Naive thymus-derived CD4-positive, alpha-beta T cell (primary cell): ENCODE measurements at regions of chr19 and their contacts with region 1.

Region 1: DNA sequence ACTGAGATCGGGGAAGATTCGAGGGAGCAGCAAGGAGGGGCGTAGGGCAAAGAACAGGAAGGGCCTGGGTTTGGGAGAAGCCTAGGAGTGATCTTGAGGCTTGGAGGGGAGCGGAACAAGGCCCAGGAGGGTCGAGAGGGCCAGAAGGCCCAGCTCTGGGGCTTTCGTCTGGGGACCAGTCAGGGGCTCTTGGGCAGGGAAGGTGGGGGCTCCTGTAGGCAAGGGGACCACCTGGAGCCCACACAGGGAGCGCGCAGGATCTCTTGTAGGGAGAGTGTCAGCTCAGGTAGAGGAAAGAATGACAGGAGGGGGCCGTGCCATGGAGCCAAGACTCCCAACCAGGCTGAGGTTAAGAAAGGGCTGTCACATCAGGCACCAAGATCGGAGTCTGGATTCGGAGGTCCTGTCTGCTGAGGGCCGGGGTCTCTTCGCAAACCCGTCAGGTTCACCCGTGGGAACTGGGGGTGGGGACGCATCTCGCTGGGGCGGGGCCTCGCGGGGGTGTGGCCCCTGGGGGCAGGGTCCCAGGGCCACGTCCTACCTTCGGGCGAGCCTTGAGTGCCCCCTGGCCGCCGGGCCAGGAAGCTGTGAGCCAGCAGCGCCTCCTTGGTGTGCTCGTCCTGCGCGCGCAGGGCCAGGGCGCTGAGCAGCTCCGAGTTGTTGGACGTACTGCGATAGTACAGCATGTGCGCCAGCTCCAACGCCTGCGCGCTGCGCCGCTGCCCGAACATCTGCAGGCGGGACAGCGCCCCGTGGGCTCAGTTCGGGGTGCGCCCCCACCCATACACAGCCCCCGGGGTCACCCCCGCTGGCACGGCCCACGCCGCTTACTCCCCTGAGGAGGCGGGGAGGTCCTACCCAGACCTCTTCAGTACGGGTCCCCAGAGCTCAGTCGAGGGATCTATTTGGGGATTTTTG is 8.4 kb downstream of the EMP3 start:
- DNase-seq: peak; percentile 90 to 96 (median 93)
- ATAC-seq: peak; percentile 77
- H3K4me3 ChIP-seq: peak overlapping the region; percentile 77
- H3K4me3 Mint-ChIP-seq: peak overlapping the region; percentile 83 to 100 (median 97)
- H3K27ac ChIP-seq: peak overlapping the region; percentile 95
- H3K27ac Mint-ChIP-seq: peak overlapping the region; percentile 93 to 100 (median 97)
- H3K4me1 ChIP-seq: peaks cover 32 to 43% of the 10 kb centered on the region in 2 donors
- H3K4me1 Mint-ChIP-seq: peaks cover 25 to 61% (median 47%) of the 10 kb centered on the region in 7 donors
- H3K27me3 ChIP-seq: no peaks in the 10 kb centered on the region
- H3K27me3 Mint-ChIP-seq: no peaks in the 10 kb centered on the region

Region 2: GRCh38 chr19:48170038-48170812 is 163.5 kb before region 1 on chr19 and contains the starts of genes LIG1 and ZSWIM9:
- CTCF ChIA-PET with region 1: no interaction called
- POLR2A ChIA-PET with region 1: interaction called, 7 read pairs
- intact Hi-C with region 1: loop called in 1 of 2 experiments (anchors 5 kb)
- DNase-seq: peak; percentile 87 to 96 (median 94)
- ATAC-seq: peak; percentile 89
- H3K4me3 ChIP-seq: peak within 1 kb of the TSS; percentile 98
- H3K4me3 Mint-ChIP-seq: peak within 1 kb of the TSS; percentile 90 to 100 (median 97)
- H3K27ac ChIP-seq: peak within 1 kb of the TSS; percentile 94
- H3K27ac Mint-ChIP-seq: peak within 1 kb of the TSS; percentile 92 to 100 (median 97)
- H3K4me1 ChIP-seq: peaks cover 14 to 16% of the 10 kb centered on the region in 2 donors
- H3K4me1 Mint-ChIP-seq: peaks cover 20 to 44% (median 32%) of the 10 kb centered on the region in 7 donors
- H3K27me3 ChIP-seq: no peaks in the 10 kb centered on the region
- H3K27me3 Mint-ChIP-seq: no peaks in the 10 kb centered on the region
- total RNA-seq, gene LIG1: 61.0 to 134 (median 122) TPM
- total RNA-seq, gene ZSWIM9: 5.0 to 11.6 (median 7.4) TPM

Region 3: GRCh38 chr19:48271531-48272151 is 62.1 kb before region 1 on chr19:
- CTCF ChIA-PET with region 1: interaction called, 7 read pairs
- POLR2A ChIA-PET with region 1: interaction called, 5 read pairs
- intact Hi-C with region 1: loop called in 1 of 2 experiments (anchors 1 kb)
- DNase-seq: peak in 4 of 9 donors; percentile 5 to 32 (median 9)
- ATAC-seq: peak; percentile 40
- H3K4me3 ChIP-seq: peak overlapping the region; percentile 55
- H3K4me3 Mint-ChIP-seq: peak overlapping the region; percentile 76 to 95 (median 88)
- H3K27ac ChIP-seq: no peak overlapping the region
- H3K27ac Mint-ChIP-seq: peak overlapping the region in 1 of 9 donors; percentile 33
- H3K4me1 ChIP-seq: peaks cover 0 to 5% of the 10 kb centered on the region in 2 donors
- H3K4me1 Mint-ChIP-seq: peaks cover 13 to 30% (median 20%) of the 10 kb centered on the region in 7 donors
- H3K27me3 ChIP-seq: no peaks in the 10 kb centered on the region
- H3K27me3 Mint-ChIP-seq: peaks cover 0 to 23% (median 11%) of the 10 kb centered on the region in 5 donors

Region 4: GRCh38 chr19:48351341-48351752 is 17.6 kb after region 1 on chr19:
- CTCF ChIA-PET with region 1: no interaction called
- POLR2A ChIA-PET with region 1: no interaction called
- intact Hi-C with region 1: loop called in 1 of 2 experiments (anchors 2 kb)
- DNase-seq: peak; percentile 49 to 81 (median 64)
- ATAC-seq: peak; percentile 82
- H3K4me3 ChIP-seq: no peak overlapping the region
- H3K4me3 Mint-ChIP-seq: peak overlapping the region in 1 of 10 donors; percentile 45
- H3K27ac ChIP-seq: no peak overlapping the region
- H3K27ac Mint-ChIP-seq: peak overlapping the region in 1 of 9 donors; percentile 5
- H3K4me1 ChIP-seq: no peaks in the 10 kb centered on the region
- H3K4me1 Mint-ChIP-seq: peaks cover 0 to 10% (median 3%) of the 10 kb centered on the region in 7 donors
- H3K27me3 ChIP-seq: no peaks in the 10 kb centered on the region
- H3K27me3 Mint-ChIP-seq: no peaks in the 10 kb centered on the region

Region 5: GRCh38 chr19:48468775-48469288 is 135.1 kb after region 1 on chr19:
- CTCF ChIA-PET with region 1: no interaction called
- POLR2A ChIA-PET with region 1: no interaction called
- intact Hi-C with region 1: loop called in 1 of 2 experiments (anchors 1 kb)
- DNase-seq: peak; percentile 93 to 100 (median 100)
- ATAC-seq: peak; percentile 93
- H3K4me3 ChIP-seq: peak overlapping the region; percentile 93
- H3K4me3 Mint-ChIP-seq: peak overlapping the region; percentile 81 to 96 (median 92)
- H3K27ac ChIP-seq: peak overlapping the region; percentile 86
- H3K27ac Mint-ChIP-seq: peak overlapping the region; percentile 85 to 96 (median 90)
- H3K4me1 ChIP-seq: peaks cover 7 to 15% of the 10 kb centered on the region in 2 donors
- H3K4me1 Mint-ChIP-seq: peaks cover 0 to 30% (median 18%) of the 10 kb centered on the region in 7 donors
- H3K27me3 ChIP-seq: no peaks in the 10 kb centered on the region
- H3K27me3 Mint-ChIP-seq: no peaks in the 10 kb centered on the region

Region 6: DNA sequence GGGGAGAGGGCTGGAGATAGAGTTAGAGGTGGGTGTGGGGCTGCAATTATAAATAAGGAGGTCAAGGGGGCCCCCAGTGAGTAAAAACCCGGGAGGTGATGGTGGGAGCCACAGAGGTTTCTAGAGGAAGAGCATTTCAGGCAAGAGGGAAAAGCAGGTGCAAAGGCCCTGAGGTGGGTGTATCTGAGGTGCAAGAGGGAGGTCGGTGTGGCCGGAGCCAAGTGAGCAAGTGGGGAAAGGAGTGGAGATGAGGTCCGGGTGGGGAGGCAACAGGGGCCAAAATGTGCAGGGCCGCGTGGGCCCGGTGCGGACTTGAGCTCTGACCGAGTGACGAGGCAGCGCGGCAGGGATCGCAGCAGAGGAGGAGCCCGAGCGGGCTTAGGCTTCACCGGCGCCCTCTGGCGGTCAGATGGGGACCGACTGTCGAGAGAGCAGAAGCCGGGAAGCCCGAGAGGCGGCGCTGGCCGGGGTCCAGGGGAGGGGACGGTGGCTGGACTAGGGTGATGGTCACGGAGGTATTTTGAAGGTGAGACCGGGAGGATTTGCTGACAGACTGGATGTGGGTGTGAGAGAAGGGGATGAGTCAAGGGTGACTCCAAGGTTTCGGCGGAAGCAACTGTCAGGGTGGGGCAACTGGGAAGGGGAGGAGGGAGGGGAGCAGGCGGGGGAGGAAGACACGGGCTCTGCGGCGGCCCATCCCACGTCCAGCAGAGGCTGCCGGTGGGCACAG is 255.1 kb after region 1 on chr19:
- CTCF ChIA-PET with region 1: interaction called, 3 read pairs
- POLR2A ChIA-PET with region 1: interaction called, 3 read pairs
- intact Hi-C with region 1: loop called in 1 of 2 experiments (anchors 10 kb)
- DNase-seq: peak; percentile 65 to 92 (median 81)
- ATAC-seq: peak; percentile 92
- H3K4me3 ChIP-seq: no peak overlapping the region
- H3K4me3 Mint-ChIP-seq: peak overlapping the region; percentile 51 to 93 (median 78)
- H3K27ac ChIP-seq: no peak overlapping the region
- H3K27ac Mint-ChIP-seq: peak overlapping the region in 6 of 9 donors; percentile 37 to 86 (median 78)
- H3K4me1 ChIP-seq: peaks cover 0 to 3% of the 10 kb centered on the region in 2 donors
- H3K4me1 Mint-ChIP-seq: peaks cover 11 to 27% (median 15%) of the 10 kb centered on the region in 7 donors
- H3K27me3 ChIP-seq: no peaks in the 10 kb centered on the region
- H3K27me3 Mint-ChIP-seq: peaks cover 0 to 5% (median 0%) of the 10 kb centered on the region in 5 donors

Region 7: GRCh38 chr19:48872182-48872883 is 538.6 kb after region 1 on chr19 and contains the start of gene PPP1R15A:
- CTCF ChIA-PET with region 1: no interaction called
- POLR2A ChIA-PET with region 1: no interaction called
- intact Hi-C with region 1: loop called in 1 of 2 experiments (anchors 2 kb)
- DNase-seq: peak; percentile 96 to 99 (median 98)
- ATAC-seq: peak; percentile 58
- H3K4me3 ChIP-seq: peak within 1 kb of the TSS; percentile 86
- H3K4me3 Mint-ChIP-seq: peak within 1 kb of the TSS; percentile 94 to 100 (median 98)
- H3K27ac ChIP-seq: peak within 1 kb of the TSS; percentile 99
- H3K27ac Mint-ChIP-seq: peak within 1 kb of the TSS; percentile 94 to 100 (median 99)
- H3K4me1 ChIP-seq: peaks cover 34 to 36% of the 10 kb centered on the region in 2 donors
- H3K4me1 Mint-ChIP-seq: peaks cover 31 to 51% (median 41%) of the 10 kb centered on the region in 7 donors
- H3K27me3 ChIP-seq: no peaks in the 10 kb centered on the region
- H3K27me3 Mint-ChIP-seq: peaks cover 0 to 14% (median 0%) of the 10 kb centered on the region in 5 donors
- total RNA-seq, gene PPP1R15A: 31.5 to 1,030 (median 71.9) TPM